ENCODE measurements at regions of chr2 and their contacts with region 1.

Region 1: GRCh38 chr2:189506514-189506976 is 65.3 kb downstream of the WDR75 start:
- DNase-seq: peak; percentile 39
- H3K4me3 Mint-ChIP-seq: no peak overlapping the region
- H3K27ac Mint-ChIP-seq: peak overlapping the region; percentile 6
- H3K4me1 Mint-ChIP-seq: peaks cover 15% of the 10 kb centered on the region
- H3K27me3 Mint-ChIP-seq: no peaks in the 10 kb centered on the region

Region 2: GRCh38 chr2:189483998-189484740 is 22.4 kb before region 1 on chr2:
- CTCF ChIA-PET with region 1: no interaction called
- POLR2A ChIA-PET with region 1: no interaction called
- intact Hi-C with region 1: loop called (anchors 1 kb)
- DNase-seq: no peak
- H3K4me3 Mint-ChIP-seq: no peak overlapping the region
- H3K27ac Mint-ChIP-seq: no peak overlapping the region
- H3K4me1 Mint-ChIP-seq: no peaks in the 10 kb centered on the region
- H3K27me3 Mint-ChIP-seq: no peaks in the 10 kb centered on the region

Region 3: GRCh38 chr2:189624648-189625355 is 118.3 kb after region 1 on chr2:
- CTCF ChIA-PET with region 1: no interaction called
- POLR2A ChIA-PET with region 1: no interaction called
- intact Hi-C with region 1: no loop called
- DNase-seq: no peak
- H3K4me3 Mint-ChIP-seq: no peak overlapping the region
- H3K27ac Mint-ChIP-seq: no peak overlapping the region
- H3K4me1 Mint-ChIP-seq: peaks cover 8% of the 10 kb centered on the region
- H3K27me3 Mint-ChIP-seq: no peaks in the 10 kb centered on the region

Region 4: GRCh38 chr2:189641590-189641989 is 135.0 kb after region 1 on chr2:
- CTCF ChIA-PET with region 1: no interaction called
- POLR2A ChIA-PET with region 1: no interaction called
- intact Hi-C with region 1: loop called (anchors 5 kb)
- DNase-seq: peak; percentile 74
- H3K4me3 Mint-ChIP-seq: no peak overlapping the region
- H3K27ac Mint-ChIP-seq: peak overlapping the region; percentile 36
- H3K4me1 Mint-ChIP-seq: peaks cover 27% of the 10 kb centered on the region
- H3K27me3 Mint-ChIP-seq: no peaks in the 10 kb centered on the region